Motor neuron (in vitro differentiated cells): ENCODE measurements at regions of chr17 and their contacts with region 1.

Region 1: DNA sequence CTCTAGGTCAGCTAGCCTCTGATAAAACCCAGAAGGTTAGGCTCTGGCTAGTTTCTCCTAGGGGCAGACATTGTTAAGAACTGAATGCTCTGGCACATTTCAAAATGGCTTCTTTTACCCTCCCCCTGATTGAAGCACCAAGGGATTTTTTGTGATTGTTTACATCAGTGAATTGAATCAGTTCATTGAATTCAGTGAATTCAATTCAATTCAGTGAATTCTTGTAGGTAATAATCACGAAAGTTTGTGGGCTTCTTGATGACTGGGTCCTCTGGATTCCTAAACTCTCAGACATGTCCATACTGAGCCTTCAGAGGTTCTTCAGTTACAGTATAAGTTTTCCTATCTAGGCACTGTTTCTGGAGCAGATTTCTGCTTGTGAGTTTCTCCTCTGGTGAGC is 135.2 kb upstream of the ELAC2 start:
- ATAC-seq: no peak
- H3K4me3 ChIP-seq: no peak overlapping the region
- H3K27ac ChIP-seq: no peak overlapping the region
- H3K4me1 ChIP-seq: no peaks in the 10 kb centered on the region

Region 2: DNA sequence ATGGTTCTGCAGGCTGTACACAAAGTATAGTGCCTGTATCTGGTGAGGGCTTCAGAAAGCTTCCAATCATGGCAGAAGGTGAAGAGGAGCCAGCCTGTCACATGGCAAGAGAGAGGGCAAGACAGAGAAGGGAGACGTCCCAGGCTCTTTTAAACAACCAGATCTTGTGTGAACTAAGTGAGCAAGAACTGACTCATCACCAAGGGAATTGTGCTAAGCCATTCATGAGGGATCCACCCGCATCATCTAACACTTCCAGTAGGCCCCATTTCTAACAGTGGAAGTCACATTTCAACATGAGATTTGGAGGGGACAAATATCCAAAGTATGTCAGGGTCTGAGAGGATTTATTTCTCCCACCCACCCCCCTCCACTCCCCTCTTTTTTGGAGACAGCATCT is 79.0 kb before region 1 on chr17:
- in situ Hi-C with region 1: loop called in 1 of 9 experiments (anchors 25 kb)
- ATAC-seq: peak in 3 of 8 experiments; percentile 54 to 90 (median 67)
- H3K4me3 ChIP-seq: no peak overlapping the region
- H3K27ac ChIP-seq: no peak overlapping the region
- H3K4me1 ChIP-seq: peaks cover under 1% of the 10 kb centered on the region in 2 donors